ENCODE measurements at regions of chr7 and their contacts with region 1.

Region 1: GRCh38 chr7:95441042-95441823 is 6.4 kb upstream of the PON2 start:
- DNase-seq: peak; percentile 52 to 82
- H3K4me3 ChIP-seq: peak overlapping the region; percentile 19
- H3K4me3 Mint-ChIP-seq: peak overlapping the region; percentile 70
- H3K27ac Mint-ChIP-seq: peak overlapping the region; percentile 85
- H3K4me1 ChIP-seq: peaks cover 61% of the 10 kb centered on the region
- H3K4me1 Mint-ChIP-seq: peaks cover 22% of the 10 kb centered on the region
- H3K27me3 ChIP-seq: no peaks in the 10 kb centered on the region
- H3K27me3 Mint-ChIP-seq: no peaks in the 10 kb centered on the region
- CTCF ChIP-seq: no peak

Region 2: GRCh38 chr7:94969434-94970084 is 471.7 kb before region 1 on chr7:
- CTCF ChIA-PET with region 1: no interaction called
- POLR2A ChIA-PET with region 1: no interaction called
- intact Hi-C with region 1: no loop called
- DNase-seq: peak; percentile 33 to 67
- H3K4me3 ChIP-seq: no peak overlapping the region
- H3K4me3 Mint-ChIP-seq: peak overlapping the region; percentile 16
- H3K27ac Mint-ChIP-seq: peak overlapping the region; percentile 31
- H3K4me1 ChIP-seq: peaks cover 45% of the 10 kb centered on the region
- H3K4me1 Mint-ChIP-seq: peaks cover 40% of the 10 kb centered on the region
- H3K27me3 ChIP-seq: no peaks in the 10 kb centered on the region
- H3K27me3 Mint-ChIP-seq: no peaks in the 10 kb centered on the region
- CTCF ChIP-seq: no peak

Region 3: DNA sequence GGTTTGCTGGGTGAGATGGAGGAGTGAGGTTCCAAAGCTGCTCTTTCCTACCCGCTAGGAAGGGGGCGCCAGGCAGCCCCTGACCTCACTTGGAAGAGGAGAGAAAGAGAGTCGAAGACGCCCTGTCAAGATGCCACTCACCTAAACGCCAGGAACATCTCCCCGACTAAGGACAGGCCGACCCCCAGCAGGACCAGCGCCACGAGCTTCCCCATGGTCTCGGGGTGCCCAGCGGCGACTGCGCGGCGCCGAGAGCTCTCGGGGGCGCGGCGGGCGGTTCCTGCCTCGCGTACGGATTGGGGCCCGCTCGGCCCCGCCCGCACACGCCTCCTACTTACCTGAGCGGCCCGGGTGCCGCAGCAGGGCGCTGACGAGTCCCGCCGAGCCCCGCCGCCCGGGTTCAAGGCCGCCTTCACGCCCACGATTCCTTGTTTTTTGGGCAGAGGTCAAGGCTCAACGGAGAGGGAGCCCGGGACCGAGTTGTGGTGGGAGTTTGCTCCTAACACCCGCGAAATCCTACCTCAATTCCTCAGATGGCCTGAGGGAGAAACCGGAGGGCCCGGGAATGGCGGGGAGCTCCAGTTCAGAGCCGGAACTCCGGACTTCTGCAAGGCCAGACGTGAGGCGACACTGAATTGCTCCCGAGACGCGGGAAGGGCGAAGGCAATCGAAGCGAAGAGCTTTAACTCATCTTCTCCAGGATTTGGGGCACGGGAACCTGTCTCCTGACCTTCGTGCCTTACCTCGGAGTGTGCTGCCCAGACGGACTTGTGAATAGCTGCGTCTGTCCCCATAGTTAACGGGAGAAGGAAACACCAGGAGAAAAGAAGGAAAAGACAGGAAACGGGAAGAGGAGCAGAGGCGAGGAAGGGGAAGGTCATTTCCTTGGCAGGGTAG is 44.8 kb before region 1 on chr7 and contains the start of gene PON3:
- CTCF ChIA-PET with region 1: interaction called, 15 read pairs
- POLR2A ChIA-PET with region 1: interaction called, 3 read pairs
- intact Hi-C with region 1: loop called (anchors 2 kb)
- DNase-seq: peak; percentile 73 to 81
- H3K4me3 ChIP-seq: peak within 1 kb of the TSS; percentile 83
- H3K4me3 Mint-ChIP-seq: peak within 1 kb of the TSS; percentile 82
- H3K27ac Mint-ChIP-seq: peak within 1 kb of the TSS; percentile 63
- H3K4me1 ChIP-seq: peaks cover 9% of the 10 kb centered on the region; the same call in 1 of the 2 replicates
- H3K4me1 Mint-ChIP-seq: peaks cover 11% of the 10 kb centered on the region
- H3K27me3 ChIP-seq: no peaks in the 10 kb centered on the region
- H3K27me3 Mint-ChIP-seq: no peaks in the 10 kb centered on the region
- CTCF ChIP-seq: peak; percentile 75 to 87
- total RNA-seq, gene PON3: 13.4 and 15.0 TPM in 2 replicates

Region 4: GRCh38 chr7:95421000-95421846 is 20.0 kb before region 1 on chr7:
- CTCF ChIA-PET with region 1: no interaction called
- POLR2A ChIA-PET with region 1: no interaction called
- intact Hi-C with region 1: loop called (anchors 2 kb)
- DNase-seq: peak in 1 of 2 experiments; percentile 32
- H3K4me3 ChIP-seq: no peak overlapping the region
- H3K4me3 Mint-ChIP-seq: peak overlapping the region; percentile 23
- H3K27ac Mint-ChIP-seq: peak overlapping the region; percentile 59
- H3K4me1 ChIP-seq: peaks cover 26% of the 10 kb centered on the region
- H3K4me1 Mint-ChIP-seq: peaks cover 24% of the 10 kb centered on the region
- H3K27me3 ChIP-seq: no peaks in the 10 kb centered on the region
- H3K27me3 Mint-ChIP-seq: no peaks in the 10 kb centered on the region
- CTCF ChIP-seq: no peak

Region 5: GRCh38 chr7:95470452-95470851 is 29.2 kb after region 1 on chr7:
- CTCF ChIA-PET with region 1: interaction called, 7 read pairs
- POLR2A ChIA-PET with region 1: interaction called, 4 read pairs
- intact Hi-C with region 1: loop called (anchors 1 kb)
- DNase-seq: peak; percentile 54 to 59
- H3K4me3 ChIP-seq: no peak overlapping the region
- H3K4me3 Mint-ChIP-seq: no peak overlapping the region
- H3K27ac Mint-ChIP-seq: peak overlapping the region; percentile 14
- H3K4me1 ChIP-seq: peaks cover 11% of the 10 kb centered on the region
- H3K4me1 Mint-ChIP-seq: peaks cover 7% of the 10 kb centered on the region
- H3K27me3 ChIP-seq: no peaks in the 10 kb centered on the region
- H3K27me3 Mint-ChIP-seq: no peaks in the 10 kb centered on the region
- CTCF ChIP-seq: no peak

Region 6: DNA sequence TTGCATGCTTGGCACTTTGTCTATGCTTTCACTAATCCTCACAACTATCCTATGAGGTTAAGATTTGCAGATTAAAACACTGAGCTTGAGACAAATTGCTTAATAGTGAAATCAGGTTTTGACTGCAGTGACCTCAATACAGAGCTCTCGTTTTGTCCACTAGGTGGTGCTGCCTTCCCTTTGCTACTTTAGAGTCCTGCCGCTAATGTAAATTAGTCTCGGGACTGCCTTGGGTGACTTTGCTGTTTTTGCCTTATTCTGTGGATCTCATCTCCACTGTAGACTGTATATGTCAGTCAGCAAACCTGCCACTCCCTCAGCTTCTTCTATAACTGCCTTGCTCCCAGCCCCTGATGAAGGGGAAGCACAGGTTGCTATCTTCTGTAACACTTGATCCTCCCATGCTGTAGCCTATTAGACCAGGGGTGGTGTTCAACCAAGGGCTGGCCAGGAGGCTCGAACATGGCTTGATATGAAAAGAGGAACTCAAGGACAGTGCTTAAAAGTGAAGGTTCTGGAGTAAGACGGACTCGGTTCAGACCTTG is 70.6 kb after region 1 on chr7:
- CTCF ChIA-PET with region 1: no interaction called
- POLR2A ChIA-PET with region 1: no interaction called
- intact Hi-C with region 1: no loop called
- DNase-seq: peak; percentile 65 to 75
- H3K4me3 ChIP-seq: no peak overlapping the region
- H3K4me3 Mint-ChIP-seq: no peak overlapping the region
- H3K27ac Mint-ChIP-seq: no peak overlapping the region
- H3K4me1 ChIP-seq: no peaks in the 10 kb centered on the region
- H3K4me1 Mint-ChIP-seq: no peaks in the 10 kb centered on the region
- H3K27me3 ChIP-seq: no peaks in the 10 kb centered on the region
- H3K27me3 Mint-ChIP-seq: peaks cover 9% of the 10 kb centered on the region
- CTCF ChIP-seq: peak; percentile 83 to 84

Region 7: GRCh38 chr7:95545078-95545498 is 103.9 kb after region 1 on chr7:
- CTCF ChIA-PET with region 1: no interaction called
- POLR2A ChIA-PET with region 1: no interaction called
- intact Hi-C with region 1: no loop called
- DNase-seq: peak in 1 of 2 experiments; percentile 43
- H3K4me3 ChIP-seq: no peak overlapping the region
- H3K4me3 Mint-ChIP-seq: peak overlapping the region; percentile 19
- H3K27ac Mint-ChIP-seq: no peak overlapping the region
- H3K4me1 ChIP-seq: no peaks in the 10 kb centered on the region
- H3K4me1 Mint-ChIP-seq: peaks cover 7% of the 10 kb centered on the region
- H3K27me3 ChIP-seq: no peaks in the 10 kb centered on the region
- H3K27me3 Mint-ChIP-seq: peaks cover 2% of the 10 kb centered on the region
- CTCF ChIP-seq: peak; percentile 51 to 80